Activated CD8-positive, alpha-beta T cell treated with anti-CD3 and anti-CD28 coated beads, Interleukin-2, amount 10 ng/mL, durations not matched to agents 7 days and 5 days (primary cell): ENCODE measurements at regions of chr2 and their contacts with region 1.

Region 1: GRCh38 chr2:127387655-127388422 is at the start of gene MAP3K2:
- DNase-seq: peak; percentile 93
- ATAC-seq: peak; percentile 82
- H3K4me3 Mint-ChIP-seq: peak within 1 kb of the TSS; percentile 90
- H3K27ac Mint-ChIP-seq: peak within 1 kb of the TSS; percentile 87
- H3K4me1 Mint-ChIP-seq: peaks cover 60% of the 10 kb centered on the region
- H3K27me3 Mint-ChIP-seq: no peaks in the 10 kb centered on the region
- total RNA-seq, gene MAP3K2: 55.7 to 58.5 TPM

Region 2: GRCh38 chr2:127293748-127294562 is 93.9 kb before region 1 on chr2 and contains the start of gene ERCC3:
- CTCF ChIA-PET with region 1: no interaction called
- POLR2A ChIA-PET with region 1: interaction called, 14 read pairs
- DNase-seq: peak; percentile 90
- ATAC-seq: peak; percentile 98
- H3K4me3 Mint-ChIP-seq: peak within 1 kb of the TSS; percentile 99
- H3K27ac Mint-ChIP-seq: peak within 1 kb of the TSS; percentile 98
- H3K4me1 Mint-ChIP-seq: peaks cover 28% of the 10 kb centered on the region
- H3K27me3 Mint-ChIP-seq: no peaks in the 10 kb centered on the region
- total RNA-seq, gene ERCC3: 59.4 to 61.7 TPM

Region 3: DNA sequence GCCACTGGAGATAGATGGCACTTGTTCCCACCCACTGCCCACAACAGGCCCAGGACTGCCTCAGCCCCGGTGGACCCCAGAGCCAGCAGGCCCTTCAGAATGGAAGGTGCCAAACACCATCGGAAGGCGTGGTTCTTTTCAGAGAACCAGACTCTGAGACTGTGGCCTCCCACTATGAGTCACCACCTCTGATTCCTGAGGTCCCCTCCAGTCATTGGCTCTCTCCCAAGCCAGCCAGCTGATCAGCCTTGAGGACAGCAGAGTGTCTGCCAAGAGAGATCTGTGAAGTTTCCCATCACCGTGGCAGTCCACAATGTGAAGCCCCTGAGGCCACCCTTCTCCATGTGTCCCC is 10.4 kb after region 1 on chr2:
- CTCF ChIA-PET with region 1: interaction called, 10 read pairs
- POLR2A ChIA-PET with region 1: interaction called, 5 read pairs
- DNase-seq: peak; percentile 58
- ATAC-seq: peak; percentile 93
- H3K4me3 Mint-ChIP-seq: no peak overlapping the region
- H3K27ac Mint-ChIP-seq: no peak overlapping the region
- H3K4me1 Mint-ChIP-seq: peaks cover 13% of the 10 kb centered on the region
- H3K27me3 Mint-ChIP-seq: no peaks in the 10 kb centered on the region

Region 4: GRCh38 chr2:127415593-127416505 is 28.0 kb after region 1 on chr2:
- CTCF ChIA-PET with region 1: interaction called, 10 read pairs
- POLR2A ChIA-PET with region 1: interaction called, 7 read pairs
- DNase-seq: peak; percentile 83
- ATAC-seq: peak; percentile 95
- H3K4me3 Mint-ChIP-seq: peak overlapping the region; percentile 75
- H3K27ac Mint-ChIP-seq: peak overlapping the region; percentile 74
- H3K4me1 Mint-ChIP-seq: peaks cover 30% of the 10 kb centered on the region
- H3K27me3 Mint-ChIP-seq: peaks cover 13% of the 10 kb centered on the region